Posterior cingulate gyrus (tissue), 11 donors: ENCODE measurements at regions of chr17 and their contacts with region 1.

Region 1: GRCh38 chr17:75109407-75110233 is at the start of gene ARMC7:
- DNase-seq: peak; percentile 82 to 99 (median 88)

Region 2: DNA sequence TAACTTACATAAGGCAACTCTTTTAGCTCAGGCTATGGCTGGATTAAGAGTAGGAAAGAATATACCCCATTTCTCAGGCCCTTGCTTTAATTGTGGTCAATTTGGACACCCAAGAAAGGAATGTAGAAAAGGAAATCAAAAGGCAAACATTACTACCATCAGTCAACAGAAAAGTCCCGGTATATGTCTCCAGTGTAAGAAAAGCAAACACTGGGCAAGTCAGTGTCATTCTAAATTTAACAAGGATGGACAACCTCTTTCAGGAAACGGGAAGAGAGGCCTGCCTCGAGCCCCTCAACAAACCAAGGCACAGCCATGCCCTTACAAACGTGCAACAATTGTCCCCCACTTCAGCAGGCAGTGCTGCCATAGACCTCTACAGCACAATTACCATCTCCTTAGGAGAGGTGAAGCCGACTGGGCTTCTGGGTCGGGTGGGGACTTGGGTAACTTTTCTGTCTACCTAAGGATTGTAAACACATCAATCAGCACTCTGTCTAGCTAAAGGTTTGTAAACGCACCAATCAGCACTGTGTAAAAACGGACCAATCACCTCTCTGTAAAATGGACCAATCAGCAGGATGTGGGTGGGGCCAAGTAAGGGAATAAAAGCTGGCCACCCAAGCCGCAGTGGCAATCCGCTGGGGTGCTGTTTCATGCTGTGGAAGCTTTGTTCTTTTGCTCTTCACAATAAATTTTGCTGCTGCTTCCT is 84.8 kb before region 1 on chr17:
- intact Hi-C with region 1: no loop called
- DNase-seq: peak in 1 of 10 donors; percentile 7

Region 3: GRCh38 chr17:75059369-75060345 is 50.0 kb before region 1 on chr17:
- intact Hi-C with region 1: loop called (anchors 5 kb)
- DNase-seq: peak in 9 of 10 donors; percentile 31 to 92 (median 44)

Region 4: DNA sequence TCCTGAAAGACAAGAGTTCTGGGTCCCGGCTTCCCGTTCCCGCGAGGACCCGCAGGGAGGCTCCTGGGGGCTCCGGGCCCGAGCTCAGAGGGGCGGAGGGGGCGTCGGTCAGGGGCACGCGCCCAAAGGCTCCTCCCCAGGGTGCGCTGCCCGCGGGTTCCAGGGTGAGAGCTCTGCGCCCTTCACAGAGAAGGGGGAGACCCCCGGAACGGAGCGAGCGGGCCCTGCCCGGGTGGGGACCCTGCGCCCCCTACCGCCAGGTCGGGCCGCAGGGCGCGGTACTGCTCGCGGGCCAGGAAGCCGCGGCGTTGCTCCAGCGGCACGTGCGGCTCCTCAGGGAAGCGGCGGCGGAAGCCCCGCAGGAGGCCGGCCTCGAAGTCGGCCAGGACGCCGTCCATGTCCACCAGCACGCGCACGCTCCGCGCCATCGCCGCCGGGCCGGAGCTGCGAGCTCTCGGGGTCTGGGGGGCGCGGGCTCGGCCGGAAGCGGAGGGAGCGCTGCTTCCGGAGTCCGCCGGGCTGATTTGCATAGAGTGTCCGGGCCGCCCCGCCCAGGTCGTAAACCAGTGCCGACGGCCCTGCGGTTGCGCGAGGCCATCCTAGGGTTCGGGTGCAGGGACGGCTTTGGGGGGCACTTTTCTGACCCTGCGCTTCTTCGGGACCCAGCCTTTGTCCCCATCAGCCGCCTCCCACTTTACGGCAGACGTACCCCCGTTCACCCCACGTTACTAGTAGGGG is 21.8 kb after region 1 on chr17 and contains the start of gene NT5C:
- intact Hi-C with region 1: loop called (anchors 2 kb)
- DNase-seq: peak; percentile 49 to 96 (median 70)

Region 5: GRCh38 chr17:75163074-75163473 is 53.5 kb after region 1 on chr17:
- intact Hi-C with region 1: no loop called
- DNase-seq: peak in 2 of 10 donors; percentile 4 to 20

Region 6: DNA sequence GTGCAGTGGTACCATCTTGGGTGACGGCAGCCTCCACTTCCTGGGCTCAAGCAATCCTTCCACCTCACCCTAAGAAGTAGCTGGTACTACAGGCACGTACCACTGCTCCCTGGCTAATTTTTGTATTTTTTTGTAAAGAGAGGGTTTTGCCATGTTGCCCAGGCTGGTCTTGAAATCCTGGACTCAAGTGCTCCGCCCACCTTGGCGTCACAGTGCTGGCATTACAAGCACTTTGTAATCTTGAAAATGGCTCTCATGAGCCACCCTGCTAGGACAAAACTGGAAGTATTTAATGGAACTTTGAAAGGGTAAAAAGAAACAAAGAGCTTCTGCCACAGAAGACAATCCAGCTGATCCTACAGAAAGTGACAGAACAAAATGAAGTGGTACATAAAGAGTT is 63.9 kb after region 1 on chr17:
- intact Hi-C with region 1: loop called (anchors 5 kb)
- DNase-seq: peak in 2 of 10 donors; percentile 5 to 12

Region 7: GRCh38 chr17:75199886-75200618 is 90.4 kb after region 1 on chr17:
- intact Hi-C with region 1: loop called (anchors 2 kb)
- DNase-seq: peak in 1 of 10 donors; percentile 40

Region 8: DNA sequence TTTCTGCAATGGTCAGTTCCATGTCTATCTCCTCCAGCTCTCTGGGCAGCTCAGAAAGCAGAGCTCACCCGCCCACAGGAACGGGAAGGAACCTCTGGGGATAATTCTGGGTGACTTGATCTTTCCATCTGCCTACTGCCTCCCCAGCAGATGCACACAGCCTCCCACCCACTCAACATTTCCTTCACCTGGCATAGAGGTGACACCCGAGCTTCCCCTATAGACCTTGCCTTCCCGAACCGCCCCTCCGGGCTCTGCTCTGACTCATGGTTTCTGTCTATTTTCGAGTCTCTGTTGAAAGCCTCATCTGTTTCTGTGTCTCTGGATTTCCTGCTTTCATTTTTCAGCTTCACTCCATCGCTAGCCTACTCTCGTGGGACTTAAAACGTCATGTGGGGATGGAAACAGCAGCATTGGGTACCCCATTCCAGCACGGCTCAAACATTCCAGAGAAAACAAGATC is 140.4 kb after region 1 on chr17:
- intact Hi-C with region 1: no loop called
- DNase-seq: no peak